GM12878 (cell line): ENCODE measurements at regions of chr10 and their contacts with region 1.

Region 1: GRCh38 chr10:14822879-14823755 is 14.7 kb downstream of the CDNF start:
- DNase-seq: no peak
- ATAC-seq: peak; percentile 91
- H3K4me3 ChIP-seq: no peak overlapping the region
- H3K27ac ChIP-seq: no peak overlapping the region
- H3K4me1 ChIP-seq: no peaks in the 10 kb centered on the region
- H3K27me3 ChIP-seq: no peaks in the 10 kb centered on the region
- CTCF ChIP-seq: peak; percentile 56 to 81 (median 73)
- EP300 ChIP-seq: no peak
- POLR2A ChIP-seq: no peak
- RAD21 ChIP-seq: peak; percentile 98

Region 2: GRCh38 chr10:14191871-14192270 is 631.2 kb before region 1 on chr10:
- CTCF ChIA-PET with region 1: interaction called, 14 read pairs
- POLR2A ChIA-PET with region 1: no interaction called
- RAD21 ChIA-PET with region 1: no interaction called
- SMC1A ChIA-PET with region 1: interaction called, 5 read pairs
- in situ Hi-C with region 1: loop called (anchors 10 kb)
- intact Hi-C with region 1: no loop called
- DNase-seq: no peak
- ATAC-seq: no peak
- H3K4me3 ChIP-seq: no peak overlapping the region
- H3K27ac ChIP-seq: no peak overlapping the region
- H3K4me1 ChIP-seq: no peaks in the 10 kb centered on the region
- H3K27me3 ChIP-seq: peaks cover 0 to 3% of the 10 kb centered on the region in 2 experiments; a peak in 2 of 4 replicates
- CTCF ChIP-seq: no peak
- EP300 ChIP-seq: no peak
- POLR2A ChIP-seq: no peak
- RAD21 ChIP-seq: no peak

Region 3: GRCh38 chr10:14500172-14500765 is 322.8 kb before region 1 on chr10:
- CTCF ChIA-PET with region 1: interaction called, 25 read pairs
- POLR2A ChIA-PET with region 1: no interaction called
- RAD21 ChIA-PET with region 1: interaction called, 16 read pairs
- SMC1A ChIA-PET with region 1: interaction called, 30 read pairs
- in situ Hi-C with region 1: loop called (anchors 5 kb)
- intact Hi-C with region 1: loop called (anchors 1 kb)
- DNase-seq: no peak
- ATAC-seq: no peak
- H3K4me3 ChIP-seq: no peak overlapping the region
- H3K27ac ChIP-seq: no peak overlapping the region
- H3K4me1 ChIP-seq: no peaks in the 10 kb centered on the region
- H3K27me3 ChIP-seq: no peaks in the 10 kb centered on the region
- CTCF ChIP-seq: no peak
- EP300 ChIP-seq: no peak
- POLR2A ChIP-seq: no peak
- RAD21 ChIP-seq: no peak

Region 4: GRCh38 chr10:14543046-14543903 is 279.8 kb before region 1 on chr10:
- CTCF ChIA-PET with region 1: interaction called, 134 read pairs
- POLR2A ChIA-PET with region 1: interaction called, 4 read pairs
- RAD21 ChIA-PET with region 1: interaction called, 74 read pairs
- SMC1A ChIA-PET with region 1: interaction called, 66 read pairs
- in situ Hi-C with region 1: no loop called
- intact Hi-C with region 1: no loop called
- DNase-seq: no peak
- ATAC-seq: peak; percentile 67
- H3K4me3 ChIP-seq: no peak overlapping the region
- H3K27ac ChIP-seq: peak overlapping the region; percentile 38
- H3K4me1 ChIP-seq: peaks cover 10% of the 10 kb centered on the region
- H3K27me3 ChIP-seq: no peaks in the 10 kb centered on the region
- CTCF ChIP-seq: peak; percentile 6 to 29 (median 18); a peak in 4 of 6 replicates
- EP300 ChIP-seq: no peak
- POLR2A ChIP-seq: no peak
- RAD21 ChIP-seq: peak; percentile 39; the same call in 1 of the 2 replicates

Region 5: DNA sequence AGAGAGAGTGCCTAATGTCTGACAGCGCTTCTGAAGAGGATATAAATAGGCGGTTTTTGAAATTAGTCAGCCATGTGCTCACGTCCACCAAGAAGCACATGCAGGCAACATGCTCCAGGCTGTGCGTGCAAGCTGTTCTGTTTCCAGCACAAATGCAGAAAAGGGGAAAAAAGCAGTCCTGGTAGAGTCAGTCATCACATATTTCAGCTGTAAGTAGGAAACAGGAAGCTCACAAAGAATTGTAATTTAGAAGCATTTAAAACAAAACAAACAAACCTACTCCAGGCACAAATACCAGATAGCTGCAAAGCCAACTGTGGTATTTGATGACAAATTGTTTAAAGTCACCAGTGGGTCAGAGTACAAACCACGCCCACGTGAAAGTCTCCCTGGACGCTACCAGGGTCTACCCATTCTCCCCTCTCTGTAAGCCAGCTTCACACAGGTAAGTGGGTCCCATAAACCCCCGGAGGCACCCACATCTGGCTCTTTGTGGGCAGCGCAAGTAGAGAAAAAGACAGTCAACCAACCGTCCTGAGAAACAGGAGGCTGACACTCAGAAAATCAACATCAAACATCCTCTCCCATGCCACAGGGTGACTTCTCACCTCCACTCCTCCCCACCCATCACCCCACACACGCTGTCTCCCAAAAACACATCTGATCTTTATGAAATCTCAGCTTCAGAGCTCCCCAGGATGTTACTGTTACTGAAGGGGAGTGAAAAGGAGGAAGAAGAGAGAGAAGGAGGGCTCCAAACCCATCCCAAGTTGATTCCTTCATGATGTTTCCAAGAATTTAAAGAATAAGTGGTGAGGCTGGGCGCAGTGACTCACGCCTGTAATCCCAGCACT is 234.8 kb before region 1 on chr10:
- CTCF ChIA-PET with region 1: no interaction called
- POLR2A ChIA-PET with region 1: no interaction called
- RAD21 ChIA-PET with region 1: interaction called, 4 read pairs
- SMC1A ChIA-PET with region 1: interaction called, 11 read pairs
- in situ Hi-C with region 1: no loop called
- intact Hi-C with region 1: no loop called
- DNase-seq: no peak
- ATAC-seq: peak; percentile 72
- H3K4me3 ChIP-seq: no peak overlapping the region
- H3K27ac ChIP-seq: peak overlapping the region; percentile 64
- H3K4me1 ChIP-seq: peaks cover 56% of the 10 kb centered on the region
- H3K27me3 ChIP-seq: no peaks in the 10 kb centered on the region
- CTCF ChIP-seq: no peak
- EP300 ChIP-seq: peak; percentile 23 to 80; a peak in 3 of 4 replicates
- POLR2A ChIP-seq: no peak
- RAD21 ChIP-seq: no peak

Region 6: GRCh38 chr10:14648005-14648765 is 174.9 kb before region 1 on chr10:
- CTCF ChIA-PET with region 1: interaction called, 5 read pairs
- POLR2A ChIA-PET with region 1: no interaction called
- RAD21 ChIA-PET with region 1: interaction called, 4 read pairs
- SMC1A ChIA-PET with region 1: interaction called, 12 read pairs
- in situ Hi-C with region 1: no loop called
- intact Hi-C with region 1: loop called (anchors 5 kb)
- DNase-seq: peak; percentile 99
- ATAC-seq: peak; percentile 93
- H3K4me3 ChIP-seq: peak overlapping the region; percentile 59; the same call in 1 of the 2 replicates
- H3K27ac ChIP-seq: peak overlapping the region; percentile 74
- H3K4me1 ChIP-seq: peaks cover 39% of the 10 kb centered on the region
- H3K27me3 ChIP-seq: no peaks in the 10 kb centered on the region
- CTCF ChIP-seq: no peak
- EP300 ChIP-seq: peak; percentile 97 to 98
- POLR2A ChIP-seq: no peak
- RAD21 ChIP-seq: peak; percentile 37

Region 7: GRCh38 chr10:14761372-14761771 is 61.7 kb before region 1 on chr10:
- CTCF ChIA-PET with region 1: no interaction called
- POLR2A ChIA-PET with region 1: no interaction called
- RAD21 ChIA-PET with region 1: no interaction called
- SMC1A ChIA-PET with region 1: no interaction called
- in situ Hi-C with region 1: no loop called
- intact Hi-C with region 1: no loop called
- DNase-seq: no peak
- ATAC-seq: peak; percentile 68
- H3K4me3 ChIP-seq: no peak overlapping the region
- H3K27ac ChIP-seq: no peak overlapping the region
- H3K4me1 ChIP-seq: no peaks in the 10 kb centered on the region
- H3K27me3 ChIP-seq: no peaks in the 10 kb centered on the region
- CTCF ChIP-seq: no peak
- EP300 ChIP-seq: no peak
- POLR2A ChIP-seq: no peak
- RAD21 ChIP-seq: no peak

Region 8: DNA sequence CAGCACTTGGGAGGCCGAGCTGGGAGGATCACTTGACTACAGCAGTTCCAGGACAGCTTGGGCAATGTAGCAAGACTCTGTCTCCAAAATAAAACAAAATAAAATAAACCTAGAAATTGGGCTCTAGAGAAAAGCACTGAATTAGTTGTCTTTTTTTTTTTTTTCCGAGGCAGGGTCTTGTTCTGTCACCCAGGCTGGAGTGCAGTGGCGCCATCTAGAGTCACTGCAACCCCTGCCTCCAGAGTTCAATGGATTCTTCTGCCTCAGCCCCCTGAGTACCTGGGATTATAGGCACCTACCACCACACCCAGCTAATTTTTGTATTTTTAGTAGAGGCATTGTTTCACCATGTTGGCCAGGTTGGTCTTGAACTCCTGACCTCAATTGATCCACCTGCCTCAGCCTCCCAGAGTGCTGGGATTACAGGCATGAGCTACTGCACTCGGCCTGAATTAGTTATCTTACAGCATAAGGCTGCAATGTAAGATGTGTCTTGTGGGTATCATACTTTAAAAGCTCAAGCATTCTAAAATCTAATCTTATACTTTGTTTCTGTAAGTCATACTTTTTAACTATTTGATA is 148.8 kb after region 1 on chr10:
- CTCF ChIA-PET with region 1: interaction called, 10 read pairs
- POLR2A ChIA-PET with region 1: no interaction called
- RAD21 ChIA-PET with region 1: interaction called, 5 read pairs
- SMC1A ChIA-PET with region 1: interaction called, 3 read pairs
- in situ Hi-C with region 1: no loop called
- intact Hi-C with region 1: no loop called
- DNase-seq: no peak
- ATAC-seq: peak; percentile 85
- H3K4me3 ChIP-seq: no peak overlapping the region
- H3K27ac ChIP-seq: no peak overlapping the region
- H3K4me1 ChIP-seq: no peaks in the 10 kb centered on the region
- H3K27me3 ChIP-seq: no peaks in the 10 kb centered on the region
- CTCF ChIP-seq: peak; percentile 53 to 75 (median 54)
- EP300 ChIP-seq: no peak
- POLR2A ChIP-seq: no peak
- RAD21 ChIP-seq: peak; percentile 73